Prostate gland (tissue), 2 donors: ENCODE measurements at regions of chr1 and their contacts with region 1.

Region 1: DNA sequence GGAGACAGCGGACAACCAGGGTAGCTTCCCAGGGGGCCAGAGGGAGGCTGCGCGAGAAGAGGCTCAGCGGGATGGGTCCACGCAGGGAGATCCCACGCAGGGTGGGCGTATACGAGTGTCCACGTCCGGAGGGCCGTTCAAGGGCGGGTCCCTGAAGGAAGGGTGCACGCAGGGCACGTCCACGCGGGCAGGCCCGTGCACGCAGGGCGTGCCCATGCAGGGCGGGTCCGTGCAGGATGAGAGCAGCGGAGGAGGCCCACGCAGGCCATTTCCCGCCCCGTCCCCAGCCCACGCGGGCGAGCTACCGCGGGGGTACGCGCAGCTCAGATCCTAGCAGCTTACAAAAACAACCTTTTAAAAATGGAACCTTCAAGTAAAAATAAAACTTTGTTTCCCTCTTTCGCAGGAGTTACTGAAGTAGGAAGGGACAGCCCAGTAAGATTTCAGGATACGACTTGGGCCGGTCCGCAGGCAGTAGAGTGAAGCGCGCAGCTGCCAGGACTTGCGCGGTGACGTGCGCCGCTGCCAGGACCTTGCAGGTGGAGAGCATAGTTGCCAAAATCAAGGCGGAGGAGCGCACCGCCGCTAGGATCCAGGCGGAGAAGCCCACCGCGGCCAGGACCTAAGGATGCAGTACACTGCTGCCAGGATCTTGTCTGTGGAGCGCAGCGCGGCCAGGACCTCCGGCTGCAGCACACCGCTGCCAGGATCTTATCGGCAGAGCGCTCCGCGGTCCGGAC is 416 bp upstream of the RNF187 start:
- DNase-seq: peak; percentile 36
- H3K4me3 ChIP-seq: peak overlapping the region; percentile 89 to 95
- H3K27ac ChIP-seq: peak overlapping the region; percentile 96 to 98
- H3K4me1 ChIP-seq: peaks cover 7% of the 10 kb centered on the region
- H3K27me3 ChIP-seq: no peaks in the 10 kb centered on the region
- CTCF ChIP-seq: peak in 1 of 4 experiments; percentile 18
- POLR2A ChIP-seq: no peak

Region 2: GRCh38 chr1:228165372-228166169 is 321.2 kb before region 1 on chr1 and contains the start of gene IBA57:
- intact Hi-C with region 1: loop called (anchors 10 kb)
- DNase-seq: peak; percentile 99
- H3K4me3 ChIP-seq: peak within 1 kb of the TSS; percentile 67 to 92
- H3K27ac ChIP-seq: peak within 1 kb of the TSS; percentile 92 to 99
- H3K4me1 ChIP-seq: peaks cover 5% of the 10 kb centered on the region
- H3K27me3 ChIP-seq: no peaks in the 10 kb centered on the region
- CTCF ChIP-seq: peak; percentile 95 to 100 (median 98)
- POLR2A ChIP-seq: peak; percentile 91
- total RNA-seq, gene IBA57: 5.6 to 17.4 TPM